ENCODE measurements at regions of chr3 and their contacts with region 1.

Region 1: GRCh38 chr3:11651900-11652299 is 8.2 kb upstream of the VGLL4 start:
- DNase-seq: peak; percentile 42
- CTCF ChIP-seq: peak; percentile 39

Region 2: GRCh38 chr3:11236595-11237461 is 415.1 kb before region 1 on chr3:
- CTCF ChIA-PET with region 1: interaction called, 10 read pairs
- POLR2A ChIA-PET with region 1: no interaction called
- DNase-seq: peak; percentile 73
- CTCF ChIP-seq: peak; percentile 66

Region 3: GRCh38 chr3:11379233-11379823 is 272.6 kb before region 1 on chr3:
- CTCF ChIA-PET with region 1: interaction called, 85 read pairs
- POLR2A ChIA-PET with region 1: no interaction called
- DNase-seq: peak; percentile 26
- CTCF ChIP-seq: peak; percentile 50

Region 4: GRCh38 chr3:11638495-11639358 is 13.2 kb before region 1 on chr3:
- CTCF ChIA-PET with region 1: interaction called, 10 read pairs
- POLR2A ChIA-PET with region 1: no interaction called
- DNase-seq: no peak
- CTCF ChIP-seq: no peak

Measured in GM10248 (cell line).